HCT116 (cell line): ENCODE measurements at regions of chr10 and their contacts with region 1.

Region 1: GRCh38 chr10:106317554-106317953 is 847.0 kb downstream of the SORCS1 start:
- DNase-seq: no peak
- ATAC-seq: no peak
- H3K4me3 ChIP-seq: no peak overlapping the region
- H3K27ac ChIP-seq: no peak overlapping the region
- H3K4me1 ChIP-seq: no peaks in the 10 kb centered on the region
- H3K27me3 ChIP-seq: no peaks in the 10 kb centered on the region
- CTCF ChIP-seq: no peak
- POLR2A ChIP-seq: no peak
- RAD21 ChIP-seq: no peak

Region 2: DNA sequence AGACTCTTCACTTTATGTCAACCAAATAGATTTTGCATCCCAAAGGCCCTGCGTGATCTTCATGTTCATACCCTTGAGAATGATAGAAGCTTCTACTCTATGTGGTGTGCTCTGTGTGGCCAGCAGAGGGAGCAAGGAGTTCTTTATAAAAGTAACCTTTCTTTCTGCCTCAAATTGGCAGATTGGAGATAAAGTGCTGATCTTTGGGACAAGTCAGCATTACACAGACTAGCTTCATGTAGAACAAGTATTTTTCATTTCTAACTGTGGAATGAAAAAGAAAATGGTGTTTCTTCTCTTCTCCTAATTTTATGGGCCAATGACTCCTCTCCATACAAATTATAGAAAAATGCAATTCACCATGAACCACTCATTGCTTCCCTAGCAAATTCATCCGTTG is 367.1 kb before region 1 on chr10:
- CTCF ChIA-PET with region 1: no interaction called
- POLR2A ChIA-PET with region 1: no interaction called
- RAD21 ChIA-PET with region 1: no interaction called
- intact Hi-C with region 1: no loop called
- DNase-seq: no peak
- ATAC-seq: peak; percentile 65; the same call in 1 of the 2 replicates
- H3K4me3 ChIP-seq: no peak overlapping the region
- H3K27ac ChIP-seq: no peak overlapping the region
- H3K4me1 ChIP-seq: no peaks in the 10 kb centered on the region
- H3K27me3 ChIP-seq: no peaks in the 10 kb centered on the region
- CTCF ChIP-seq: peak in 2 of 3 experiments; percentile 81 to 86; a peak in 4 of 6 replicates
- POLR2A ChIP-seq: no peak
- RAD21 ChIP-seq: peak; percentile 48

Region 3: GRCh38 chr10:106338486-106338885 is 20.9 kb after region 1 on chr10:
- CTCF ChIA-PET with region 1: no interaction called
- POLR2A ChIA-PET with region 1: no interaction called
- RAD21 ChIA-PET with region 1: no interaction called
- intact Hi-C with region 1: loop called (anchors 1 kb)
- DNase-seq: no peak
- ATAC-seq: no peak
- H3K4me3 ChIP-seq: no peak overlapping the region
- H3K27ac ChIP-seq: no peak overlapping the region
- H3K4me1 ChIP-seq: no peaks in the 10 kb centered on the region
- H3K27me3 ChIP-seq: no peaks in the 10 kb centered on the region
- CTCF ChIP-seq: no peak
- POLR2A ChIP-seq: no peak
- RAD21 ChIP-seq: no peak

Region 4: DNA sequence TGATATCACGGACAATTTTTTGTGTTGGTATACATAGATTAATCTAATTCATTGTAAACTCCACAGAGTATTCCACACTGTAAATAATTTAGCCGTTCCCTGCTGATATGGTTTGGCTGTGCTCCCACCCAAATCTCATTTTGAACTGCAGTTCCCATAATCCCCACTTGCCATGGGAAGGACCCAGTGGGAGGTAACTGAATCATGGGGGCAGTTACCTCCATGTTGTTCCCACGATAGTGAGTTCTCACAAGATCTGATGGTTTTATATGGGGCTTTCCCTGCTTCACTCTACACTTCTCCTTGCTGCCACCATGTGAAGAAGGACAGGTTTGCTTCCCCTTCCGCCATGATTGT is 289.0 kb after region 1 on chr10:
- CTCF ChIA-PET with region 1: no interaction called
- POLR2A ChIA-PET with region 1: no interaction called
- RAD21 ChIA-PET with region 1: no interaction called
- intact Hi-C with region 1: no loop called
- DNase-seq: no peak
- ATAC-seq: no peak
- H3K4me3 ChIP-seq: no peak overlapping the region
- H3K27ac ChIP-seq: no peak overlapping the region
- H3K4me1 ChIP-seq: no peaks in the 10 kb centered on the region
- H3K27me3 ChIP-seq: no peaks in the 10 kb centered on the region
- CTCF ChIP-seq: no peak
- POLR2A ChIP-seq: no peak
- RAD21 ChIP-seq: no peak